ENCODE measurements at regions of chr4 and their contacts with region 1.

Region 1: GRCh38 chr4:185134307-185134869 is 8.7 kb upstream of the SLC25A4 start:
- DNase-seq: peak; percentile 40 to 67 (median 46)
- ATAC-seq: peak; percentile 89
- H3K4me3 ChIP-seq: no peak overlapping the region
- H3K27ac ChIP-seq: no peak overlapping the region
- H3K4me1 ChIP-seq: peaks cover 0 to 3% of the 10 kb centered on the region in 2 experiments; a peak in 1 of 5 replicates
- H3K27me3 ChIP-seq: no peaks in the 10 kb centered on the region; a peak in 1 of 5 replicates
- CTCF ChIP-seq: peak; percentile 59 to 88 (median 71); a peak in 5 of 6 replicates
- EP300 ChIP-seq: no peak
- POLR2A ChIP-seq: no peak
- RAD21 ChIP-seq: peak; percentile 85 to 89

Region 2: DNA sequence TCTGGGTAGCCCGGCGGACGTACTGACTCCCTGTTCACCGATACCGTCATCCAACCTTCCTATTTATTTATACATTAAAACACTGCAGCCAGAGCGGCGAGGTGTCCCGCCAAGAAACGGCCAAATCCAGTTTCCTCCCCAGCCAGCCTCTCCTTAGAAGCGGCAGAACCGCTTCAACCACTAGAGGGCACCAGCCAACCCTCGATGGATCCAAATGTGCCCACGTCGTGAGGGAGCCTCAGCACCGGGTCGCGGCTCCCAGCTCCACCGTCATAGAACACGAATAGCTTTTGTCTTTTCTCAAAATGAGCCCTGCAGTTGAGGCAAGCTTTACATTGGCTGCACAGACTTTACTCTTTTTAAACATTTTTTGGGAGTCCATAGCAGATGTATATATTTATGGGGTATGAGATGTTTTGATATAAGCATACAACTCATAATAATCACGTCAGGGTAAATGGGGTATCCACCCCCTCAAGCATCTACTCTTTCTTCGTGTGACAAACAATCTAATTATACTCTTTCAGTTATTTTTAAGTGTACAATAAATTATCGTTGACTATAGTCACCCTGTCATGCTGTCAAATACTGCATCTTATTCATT is 129.1 kb before region 1 on chr4:
- CTCF ChIA-PET with region 1: interaction called, 7 read pairs
- POLR2A ChIA-PET with region 1: no interaction called
- in situ Hi-C with region 1: loop called (anchors 10 kb)
- intact Hi-C with region 1: loop called (anchors 1 kb)
- DNase-seq: peak; percentile 77 to 88 (median 78)
- ATAC-seq: peak; percentile 97
- H3K4me3 ChIP-seq: no peak overlapping the region
- H3K27ac ChIP-seq: no peak overlapping the region
- H3K4me1 ChIP-seq: peaks cover 0 to 9% of the 10 kb centered on the region in 2 experiments; a peak in 2 of 5 replicates
- H3K27me3 ChIP-seq: peaks cover 38 to 70% of the 10 kb centered on the region in 2 experiments
- CTCF ChIP-seq: peak; percentile 87 to 93 (median 87)
- EP300 ChIP-seq: no peak
- POLR2A ChIP-seq: no peak
- RAD21 ChIP-seq: peak; percentile 76 to 82

Region 3: GRCh38 chr4:185096032-185096653 is 38.2 kb before region 1 on chr4:
- CTCF ChIA-PET with region 1: interaction called, 3 read pairs
- POLR2A ChIA-PET with region 1: no interaction called
- in situ Hi-C with region 1: no loop called
- intact Hi-C with region 1: loop called (anchors 1 kb)
- DNase-seq: peak in 3 of 4 experiments; percentile 21 to 59 (median 24)
- ATAC-seq: no peak
- H3K4me3 ChIP-seq: no peak overlapping the region
- H3K27ac ChIP-seq: no peak overlapping the region
- H3K4me1 ChIP-seq: peaks cover 0 to 3% of the 10 kb centered on the region in 2 experiments; a peak in 2 of 5 replicates
- H3K27me3 ChIP-seq: peaks cover 15 to 22% of the 10 kb centered on the region in 2 experiments
- CTCF ChIP-seq: peak; percentile 36 to 76 (median 48); a peak in 4 of 6 replicates
- EP300 ChIP-seq: no peak
- POLR2A ChIP-seq: no peak
- RAD21 ChIP-seq: peak; percentile 70 to 74

Region 4: DNA sequence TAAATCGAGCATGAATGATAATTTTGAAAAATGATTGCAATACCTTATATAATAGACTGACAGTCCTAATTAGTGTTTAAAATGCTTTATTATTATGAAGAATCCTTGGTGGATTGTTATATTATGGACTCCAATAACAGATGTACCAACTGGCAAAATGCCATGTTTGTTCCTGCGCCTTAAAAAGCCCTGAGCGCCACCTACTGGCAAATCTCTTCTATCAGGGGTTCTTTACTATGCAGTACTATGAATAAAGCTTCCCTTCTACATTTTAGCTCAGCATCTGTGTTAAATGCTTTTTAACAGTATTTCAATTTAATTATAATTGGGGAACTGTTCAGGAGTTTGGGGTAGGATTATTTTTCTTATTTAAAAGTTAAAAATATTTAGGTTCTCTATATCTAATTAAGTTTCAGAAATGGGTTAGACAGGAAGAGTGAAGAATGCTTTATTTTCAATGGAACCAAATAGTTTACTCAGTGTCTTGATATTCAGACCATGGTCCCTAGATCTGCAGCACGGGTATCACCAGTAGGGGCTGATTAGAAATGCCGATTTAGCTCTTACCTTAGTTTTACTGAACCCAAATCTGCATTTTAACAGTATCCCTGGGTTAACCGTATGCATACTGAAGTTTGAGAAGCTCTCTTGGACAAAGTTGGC is 49.4 kb after region 1 on chr4:
- CTCF ChIA-PET with region 1: no interaction called
- POLR2A ChIA-PET with region 1: no interaction called
- in situ Hi-C with region 1: no loop called
- intact Hi-C with region 1: loop called (anchors 2 kb)
- DNase-seq: peak; percentile 65 to 90 (median 69)
- ATAC-seq: peak; percentile 89
- H3K4me3 ChIP-seq: no peak overlapping the region
- H3K27ac ChIP-seq: peak overlapping the region; percentile 9; the same call in 1 of the 3 replicates
- H3K4me1 ChIP-seq: no peaks in the 10 kb centered on the region; a peak in 1 of 5 replicates
- H3K27me3 ChIP-seq: no peaks in the 10 kb centered on the region
- CTCF ChIP-seq: peak; percentile 65 to 88 (median 75)
- EP300 ChIP-seq: no peak
- POLR2A ChIP-seq: no peak
- RAD21 ChIP-seq: peak; percentile 55 to 64

Region 5: GRCh38 chr4:185196437-185196836 is 62.0 kb after region 1 on chr4:
- CTCF ChIA-PET with region 1: no interaction called
- POLR2A ChIA-PET with region 1: no interaction called
- in situ Hi-C with region 1: no loop called
- intact Hi-C with region 1: no loop called
- DNase-seq: no peak
- ATAC-seq: no peak
- H3K4me3 ChIP-seq: no peak overlapping the region
- H3K27ac ChIP-seq: no peak overlapping the region
- H3K4me1 ChIP-seq: peaks cover 4 to 8% of the 10 kb centered on the region in 2 experiments; a peak in 4 of 5 replicates
- H3K27me3 ChIP-seq: no peaks in the 10 kb centered on the region
- CTCF ChIP-seq: no peak
- EP300 ChIP-seq: no peak
- POLR2A ChIP-seq: no peak
- RAD21 ChIP-seq: no peak

Region 6: GRCh38 chr4:185597532-185598188 is 463.3 kb after region 1 on chr4:
- CTCF ChIA-PET with region 1: no interaction called
- POLR2A ChIA-PET with region 1: no interaction called
- in situ Hi-C with region 1: no loop called
- intact Hi-C with region 1: loop called (anchors 10 kb)
- DNase-seq: peak; percentile 65 to 78 (median 67)
- ATAC-seq: peak; percentile 89
- H3K4me3 ChIP-seq: no peak overlapping the region
- H3K27ac ChIP-seq: no peak overlapping the region
- H3K4me1 ChIP-seq: no peaks in the 10 kb centered on the region
- H3K27me3 ChIP-seq: peaks cover 17 to 25% of the 10 kb centered on the region in 2 experiments
- CTCF ChIP-seq: peak; percentile 88 to 95 (median 94)
- EP300 ChIP-seq: no peak
- POLR2A ChIP-seq: no peak
- RAD21 ChIP-seq: peak; percentile 77 to 85